Ascending aorta (tissue), 2 donors: ENCODE measurements at regions of chr12 and their contacts with region 1.

Region 1: DNA sequence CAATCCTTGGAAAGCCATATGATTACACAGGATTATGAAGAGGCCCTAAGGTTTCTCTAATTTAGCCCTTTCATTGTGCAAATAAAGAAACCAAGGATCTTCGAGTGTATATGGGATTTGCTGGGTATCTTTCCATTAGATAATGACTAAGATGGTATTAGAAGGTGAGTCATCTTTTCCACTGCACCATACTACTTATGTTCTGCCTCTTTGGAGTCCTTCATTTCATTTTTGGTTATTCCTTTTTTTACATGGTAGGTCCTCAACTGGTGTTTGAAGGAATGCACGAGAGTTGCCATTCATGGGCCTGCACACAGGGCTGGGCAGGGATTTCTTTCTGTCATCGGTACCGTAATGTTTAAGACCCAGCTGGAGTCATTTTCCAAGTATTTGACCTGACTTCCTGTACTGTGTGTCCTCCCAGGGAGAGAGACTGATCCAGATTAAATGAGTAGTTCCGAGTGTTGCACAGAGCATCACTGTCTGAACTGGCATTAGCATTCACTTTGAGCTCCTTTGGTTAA is 85.7 kb downstream of the BORCS5 start:
- DNase-seq: peak in 1 of 2 donors; percentile 73
- H3K4me3 ChIP-seq: peak overlapping the region in 1 of 2 donors; percentile 30
- H3K27ac ChIP-seq: peak overlapping the region; percentile 80 to 87
- H3K4me1 ChIP-seq: peaks cover 0 to 36% of the 10 kb centered on the region in 2 donors
- H3K27me3 ChIP-seq: no peaks in the 10 kb centered on the region
- CTCF ChIP-seq: no peak

Region 2: DNA sequence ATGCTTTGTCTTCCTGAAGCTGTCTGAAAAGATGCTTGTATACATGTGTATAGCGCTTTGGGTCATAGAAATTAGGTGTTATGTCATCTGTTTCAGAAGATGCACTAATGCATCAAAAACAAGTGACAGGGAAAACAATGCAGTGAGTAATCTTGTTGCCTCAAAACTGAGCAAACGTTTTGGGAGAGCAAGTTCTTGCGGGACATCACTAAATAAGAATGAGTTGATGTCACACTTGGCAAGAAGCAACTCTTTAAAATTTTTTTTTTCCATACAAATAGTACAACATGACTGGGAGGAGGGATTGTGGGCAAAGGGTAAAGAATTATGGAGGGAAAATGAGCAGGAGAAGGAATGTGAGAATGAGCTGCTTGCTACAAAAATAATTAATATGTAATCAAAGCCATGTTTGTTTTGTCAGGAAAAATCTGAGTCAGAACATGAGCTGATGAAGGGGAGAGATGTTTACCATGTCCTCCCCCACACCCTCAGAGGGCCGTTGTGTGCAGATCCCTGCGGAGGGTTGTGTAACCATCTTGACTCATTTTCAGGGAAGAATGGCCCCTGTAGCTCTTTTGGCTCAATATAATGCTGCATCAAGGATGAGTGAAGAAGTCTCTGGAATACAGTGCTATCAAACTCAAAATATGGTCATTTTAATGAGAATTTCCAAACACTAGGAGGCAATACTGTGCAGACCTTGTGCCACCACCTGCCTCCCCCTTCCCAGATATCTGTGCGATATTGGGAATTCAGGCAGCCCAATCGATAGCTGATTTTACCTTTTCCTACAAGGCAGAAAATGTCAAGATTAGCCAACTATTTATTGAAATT is 44.4 kb before region 1 on chr12:
- intact Hi-C with region 1: loop called (anchors 2 kb)
- DNase-seq: peak in 1 of 2 donors; percentile 86
- H3K4me3 ChIP-seq: peak overlapping the region in 1 of 2 donors; percentile 23
- H3K27ac ChIP-seq: peak overlapping the region; percentile 67 to 81
- H3K4me1 ChIP-seq: peaks cover 6 to 20% of the 10 kb centered on the region in 2 donors
- H3K27me3 ChIP-seq: no peaks in the 10 kb centered on the region
- CTCF ChIP-seq: no peak

Region 3: GRCh38 chr12:12425616-12426015 is 17.0 kb before region 1 on chr12:
- intact Hi-C with region 1: loop called (anchors 2 kb)
- DNase-seq: no peak
- H3K4me3 ChIP-seq: no peak overlapping the region
- H3K27ac ChIP-seq: peak overlapping the region; percentile 68 to 79
- H3K4me1 ChIP-seq: peaks cover 9 to 18% of the 10 kb centered on the region in 2 donors
- H3K27me3 ChIP-seq: no peaks in the 10 kb centered on the region
- CTCF ChIP-seq: no peak